Gastrocnemius medialis (tissue), 4 donors: ENCODE measurements at regions of chr1 and their contacts with region 1.

Region 1: GRCh38 chr1:151024540-151025146 is 11.7 kb upstream of the BNIPL start:
- DNase-seq: peak; percentile 71 to 81
- ATAC-seq: peak; percentile 88 to 99
- H3K4me3 ChIP-seq: no peak overlapping the region
- H3K27ac ChIP-seq: peak overlapping the region; percentile 45 to 75 (median 72)
- H3K4me1 ChIP-seq: peaks cover 16 to 21% of the 10 kb centered on the region in 2 donors
- H3K27me3 ChIP-seq: no peaks in the 10 kb centered on the region
- CTCF ChIP-seq: peak; percentile 68 to 81 (median 77)
- POLR2A ChIP-seq: no peak

Region 2: DNA sequence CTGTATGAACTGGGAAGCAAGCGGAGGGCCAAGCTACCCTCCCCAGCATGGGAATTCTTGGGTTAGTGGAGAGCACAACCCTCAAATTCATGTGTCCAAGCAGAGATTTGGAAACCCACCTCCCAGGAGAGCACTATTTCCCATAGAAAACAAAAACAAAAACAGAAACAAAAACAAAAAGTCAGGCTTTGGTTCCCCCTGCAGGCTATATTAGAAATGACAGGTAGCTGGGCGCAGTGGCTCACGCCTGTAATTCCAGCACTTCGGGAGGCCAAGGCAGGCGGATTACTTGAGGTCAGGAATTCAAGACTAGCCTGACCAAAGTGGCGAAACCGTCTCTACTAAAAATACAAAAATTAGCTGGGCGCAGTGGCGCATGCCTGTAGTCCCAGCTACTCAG is 28.7 kb before region 1 on chr1:
- in situ Hi-C with region 1: no loop called
- intact Hi-C with region 1: no loop called
- DNase-seq: peak in 1 of 2 donors; percentile 78
- ATAC-seq: peak; percentile 76 to 86
- H3K4me3 ChIP-seq: peak overlapping the region in 2 of 4 donors; percentile 27 to 29
- H3K27ac ChIP-seq: peak overlapping the region; percentile 51 to 70 (median 64)
- H3K4me1 ChIP-seq: peaks cover 9 to 11% of the 10 kb centered on the region in 2 donors
- H3K27me3 ChIP-seq: no peaks in the 10 kb centered on the region
- CTCF ChIP-seq: peak; percentile 78 to 87 (median 83)
- POLR2A ChIP-seq: no peak

Region 3: GRCh38 chr1:151047925-151048645 is 23.4 kb after region 1 on chr1:
- in situ Hi-C with region 1: no loop called
- intact Hi-C with region 1: loop called (anchors 1 kb)
- DNase-seq: peak; percentile 58 to 74
- ATAC-seq: peak; percentile 83 to 87
- H3K4me3 ChIP-seq: peak overlapping the region; percentile 68 to 92 (median 78)
- H3K27ac ChIP-seq: peak overlapping the region; percentile 85 to 95 (median 92)
- H3K4me1 ChIP-seq: peaks cover 6 to 17% of the 10 kb centered on the region in 2 donors
- H3K27me3 ChIP-seq: no peaks in the 10 kb centered on the region
- CTCF ChIP-seq: peak in 3 of 5 experiments; percentile 56 to 66 (median 59)
- POLR2A ChIP-seq: no peak

Region 4: DNA sequence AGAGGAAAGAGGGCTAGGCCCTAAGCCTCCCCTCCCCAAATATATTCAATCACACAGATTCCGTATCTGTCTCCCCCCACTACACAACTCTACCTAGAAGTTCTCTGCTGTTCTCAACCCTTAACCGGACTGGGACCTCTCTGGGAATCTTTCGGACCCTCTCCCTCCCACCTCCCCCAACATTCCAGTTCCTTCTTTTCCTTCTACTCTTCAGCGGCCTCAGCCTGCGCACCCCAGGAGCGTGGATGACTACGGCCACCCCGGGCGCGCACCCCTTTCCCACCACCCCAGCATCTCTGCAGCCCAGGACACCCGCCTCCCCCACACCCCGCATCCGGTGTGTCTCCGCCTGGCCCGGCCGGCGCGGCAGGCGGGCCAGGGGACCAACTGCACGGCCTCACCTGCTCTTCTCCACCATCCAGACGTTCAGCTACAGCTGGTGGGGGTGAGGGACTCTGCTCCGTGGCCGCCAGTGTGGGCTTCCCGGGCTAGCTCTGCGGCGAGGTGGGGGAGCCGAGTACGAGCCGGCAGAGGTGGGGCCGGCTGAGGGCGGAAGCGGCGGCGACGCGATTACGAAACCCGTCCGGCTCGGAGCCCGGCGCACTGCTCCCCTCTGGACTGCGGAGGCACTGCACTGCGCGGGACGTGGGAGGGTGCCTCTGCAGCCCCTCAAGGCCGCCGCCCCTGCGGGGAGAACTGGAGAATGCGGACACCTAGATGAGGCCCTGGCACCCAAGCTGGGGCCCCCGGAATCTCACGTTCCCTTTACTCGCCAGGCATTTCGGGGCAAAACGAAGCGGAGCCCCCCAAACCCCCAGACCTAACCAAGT is 34.6 kb after region 1 on chr1 and contains the start of gene CDC42SE1:
- in situ Hi-C with region 1: no loop called
- intact Hi-C with region 1: loop called (anchors 1 kb)
- DNase-seq: peak; percentile 64 to 75
- ATAC-seq: peak; percentile 89
- H3K4me3 ChIP-seq: peak within 1 kb of the TSS; percentile 90 to 98 (median 94)
- H3K27ac ChIP-seq: peak within 1 kb of the TSS; percentile 90 to 98 (median 94)
- H3K4me1 ChIP-seq: peaks cover 28 to 35% of the 10 kb centered on the region in 2 donors
- H3K27me3 ChIP-seq: no peaks in the 10 kb centered on the region
- CTCF ChIP-seq: peak; percentile 77 to 94 (median 91)
- POLR2A ChIP-seq: peak; percentile 88 to 94
- total RNA-seq, gene CDC42SE1: 13.2 to 31.7 (median 22.8) TPM

Region 5: GRCh38 chr1:151070474-151071276 is 46.0 kb after region 1 on chr1 and contains the start of gene GABPB2:
- in situ Hi-C with region 1: no loop called
- intact Hi-C with region 1: loop called (anchors 2 kb)
- DNase-seq: peak; percentile 88 to 94
- ATAC-seq: peak; percentile 91
- H3K4me3 ChIP-seq: peak within 1 kb of the TSS; percentile 85 to 96 (median 92)
- H3K27ac ChIP-seq: peak within 1 kb of the TSS; percentile 94 to 99 (median 98)
- H3K4me1 ChIP-seq: peaks cover 9 to 19% of the 10 kb centered on the region in 2 donors
- H3K27me3 ChIP-seq: no peaks in the 10 kb centered on the region
- CTCF ChIP-seq: peak; percentile 57 to 94 (median 90)
- POLR2A ChIP-seq: peak; percentile 43 to 50
- total RNA-seq, gene GABPB2: 11.9 to 20.5 (median 17.9) TPM

Region 6: GRCh38 chr1:151098126-151098525 is 73.5 kb after region 1 on chr1:
- in situ Hi-C with region 1: no loop called
- intact Hi-C with region 1: loop called (anchors 2 kb)
- DNase-seq: no peak
- ATAC-seq: no peak
- H3K4me3 ChIP-seq: no peak overlapping the region
- H3K27ac ChIP-seq: no peak overlapping the region
- H3K4me1 ChIP-seq: no peaks in the 10 kb centered on the region
- H3K27me3 ChIP-seq: no peaks in the 10 kb centered on the region
- CTCF ChIP-seq: no peak
- POLR2A ChIP-seq: no peak

Region 7: GRCh38 chr1:151146412-151147140 is 121.9 kb after region 1 on chr1 and contains the start of gene SEMA6C:
- in situ Hi-C with region 1: no loop called
- intact Hi-C with region 1: loop called (anchors 5 kb)
- DNase-seq: peak; percentile 97 to 98
- ATAC-seq: peak; percentile 52 to 66
- H3K4me3 ChIP-seq: peak within 1 kb of the TSS; percentile 89 to 97 (median 92)
- H3K27ac ChIP-seq: peak within 1 kb of the TSS; percentile 95 to 99 (median 98)
- H3K4me1 ChIP-seq: peaks cover 40 to 48% of the 10 kb centered on the region in 2 donors
- H3K27me3 ChIP-seq: no peaks in the 10 kb centered on the region
- CTCF ChIP-seq: peak in 1 of 5 experiments; percentile 8
- POLR2A ChIP-seq: peak; percentile 97 to 98
- total RNA-seq, gene SEMA6C: 51.5 to 121 (median 108) TPM